ENCODE measurements at regions of chr1 and their contacts with region 1.

Region 1: GRCh38 chr1:11645670-11646265 is 8.5 kb downstream of the FBXO2 start:
- DNase-seq: peak; percentile 68 to 73
- H3K4me3 ChIP-seq: no peak overlapping the region
- H3K27ac ChIP-seq: no peak overlapping the region
- H3K4me1 ChIP-seq: peaks cover 7 to 22% of the 10 kb centered on the region in 2 donors
- H3K27me3 ChIP-seq: no peaks in the 10 kb centered on the region
- CTCF ChIP-seq: peak; percentile 41 to 80 (median 52)
- POLR2A ChIP-seq: no peak

Region 2: DNA sequence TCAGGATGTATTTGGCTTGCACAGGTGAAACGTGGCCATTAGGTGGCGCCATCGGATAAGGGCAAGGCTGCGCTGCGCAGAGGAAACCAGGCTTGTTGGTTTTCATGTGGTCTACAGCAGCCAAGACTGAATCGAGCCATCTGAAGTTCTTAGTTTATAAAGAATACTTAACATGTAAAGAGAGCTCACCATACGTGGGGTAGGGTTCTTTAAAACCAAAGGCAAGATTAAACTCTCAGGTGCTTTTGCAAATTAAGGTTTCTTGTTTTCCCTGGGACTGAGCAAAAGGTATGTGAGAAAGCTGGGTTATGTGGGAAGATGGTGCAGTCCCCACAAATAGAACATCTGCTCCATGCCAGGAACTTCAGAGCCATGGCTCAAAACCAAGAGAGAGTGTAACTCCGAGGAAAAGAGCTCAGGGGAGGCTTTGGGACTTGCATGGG is 608.0 kb before region 1 on chr1:
- intact Hi-C with region 1: loop called (anchors 5 kb)
- DNase-seq: peak; percentile 85 to 91
- H3K4me3 ChIP-seq: no peak overlapping the region
- H3K27ac ChIP-seq: no peak overlapping the region
- H3K4me1 ChIP-seq: no peaks in the 10 kb centered on the region
- H3K27me3 ChIP-seq: no peaks in the 10 kb centered on the region
- CTCF ChIP-seq: peak; percentile 78 to 96 (median 94)
- POLR2A ChIP-seq: no peak

Region 3: GRCh38 chr1:11248155-11248554 is 397.6 kb before region 1 on chr1:
- intact Hi-C with region 1: loop called (anchors 10 kb)
- DNase-seq: no peak
- H3K4me3 ChIP-seq: no peak overlapping the region
- H3K27ac ChIP-seq: no peak overlapping the region
- H3K4me1 ChIP-seq: no peaks in the 10 kb centered on the region
- H3K27me3 ChIP-seq: no peaks in the 10 kb centered on the region
- CTCF ChIP-seq: no peak
- POLR2A ChIP-seq: no peak

Region 4: GRCh38 chr1:11719313-11720032 is 73.7 kb after region 1 on chr1:
- intact Hi-C with region 1: loop called (anchors 5 kb)
- DNase-seq: peak; percentile 79 to 83
- H3K4me3 ChIP-seq: peak overlapping the region in 1 of 3 donors; percentile 16
- H3K27ac ChIP-seq: no peak overlapping the region
- H3K4me1 ChIP-seq: peaks cover 4 to 6% of the 10 kb centered on the region in 2 donors
- H3K27me3 ChIP-seq: no peaks in the 10 kb centered on the region
- CTCF ChIP-seq: peak; percentile 80 to 99 (median 88)
- POLR2A ChIP-seq: no peak

Region 5: DNA sequence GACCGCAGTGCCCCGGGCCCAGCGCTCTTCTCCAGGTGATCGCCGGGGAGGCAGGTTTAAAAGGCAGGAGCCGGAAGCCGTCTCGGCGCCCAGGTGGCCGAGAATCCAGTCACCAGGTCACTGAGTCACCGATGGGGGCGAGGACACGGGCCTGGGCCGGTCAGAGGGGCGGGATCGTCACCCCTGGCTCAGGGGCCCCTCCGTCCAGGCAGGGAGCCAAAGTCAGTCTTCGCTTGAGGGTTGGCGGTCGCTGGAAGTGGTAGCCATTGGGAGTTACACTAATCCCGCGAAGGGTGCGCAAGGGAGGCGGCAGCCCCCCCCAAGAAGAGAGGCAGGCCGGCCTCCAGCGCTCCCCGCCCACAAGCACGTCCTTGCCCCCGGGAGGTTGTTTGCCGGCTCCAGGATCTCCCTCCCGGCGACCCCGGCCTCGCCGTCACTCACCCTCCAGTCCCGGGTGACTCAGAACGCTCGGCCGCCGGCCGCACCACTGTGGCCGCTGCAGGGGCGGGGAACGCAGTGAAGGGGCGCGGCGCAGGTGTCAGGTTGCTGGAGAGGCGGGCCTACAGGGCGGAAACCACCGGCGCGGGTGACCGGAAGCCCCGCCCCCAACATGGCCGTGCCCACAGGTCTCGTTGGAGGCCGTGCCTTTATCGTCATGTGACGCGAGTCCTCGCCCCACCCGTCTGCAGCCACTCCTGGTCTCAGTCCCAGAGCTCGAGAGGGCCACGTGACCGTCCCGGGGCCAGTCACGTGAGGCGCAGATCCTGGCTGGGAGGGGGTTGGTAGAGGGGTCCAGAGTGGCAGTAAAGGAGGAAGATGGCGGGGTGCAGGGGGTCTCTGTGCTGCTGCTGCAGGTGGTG is 159.9 kb after region 1 on chr1 and contains the starts of genes CLCN6 and MTHFR:
- intact Hi-C with region 1: loop called (anchors 10 kb)
- DNase-seq: peak; percentile 100
- H3K4me3 ChIP-seq: peak within 1 kb of the TSS; percentile 74 to 85 (median 77)
- H3K27ac ChIP-seq: peak within 1 kb of the TSS; percentile 96 to 100 (median 99)
- H3K4me1 ChIP-seq: peaks cover 51 to 56% of the 10 kb centered on the region in 2 donors
- H3K27me3 ChIP-seq: no peaks in the 10 kb centered on the region
- CTCF ChIP-seq: no peak
- POLR2A ChIP-seq: peak; percentile 96 to 99
- total RNA-seq, gene CLCN6: 14.8 to 38.4 (median 16.9) TPM
- total RNA-seq, gene MTHFR: 52.8 to 96.9 (median 65.6) TPM